Astrocyte of the cerebellum (primary cell): ENCODE measurements at regions of chr2 and their contacts with region 1.

Region 1: DNA sequence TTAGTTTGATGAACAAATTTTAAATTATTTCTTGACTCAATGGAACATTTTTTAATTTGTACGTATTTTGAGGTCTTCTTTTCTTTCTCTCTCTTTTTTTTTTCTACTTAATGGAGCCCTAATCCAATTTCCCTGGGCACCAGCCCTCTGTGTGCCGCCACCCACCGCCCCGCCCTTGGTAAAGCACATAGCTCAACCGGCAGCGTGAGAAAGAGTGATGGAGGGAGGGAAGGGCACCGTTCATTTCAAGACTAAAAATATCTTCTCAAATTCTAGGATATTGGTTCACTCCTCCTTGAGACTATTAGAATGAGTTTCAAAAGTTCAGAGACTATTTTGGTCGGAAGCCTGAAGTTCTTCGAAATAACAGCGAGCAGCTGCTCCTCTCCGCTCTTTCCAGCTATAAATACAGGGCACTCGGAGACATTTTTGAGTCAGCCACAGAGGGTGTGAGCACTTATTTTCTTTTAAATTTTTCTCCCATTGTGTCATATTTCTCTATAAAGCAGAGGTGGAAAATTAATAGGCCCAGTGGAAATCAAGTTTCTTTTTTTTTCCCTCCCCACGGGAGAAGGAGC is 731.7 kb upstream of the ID2 start:
- DNase-seq: no peak
- H3K4me3 ChIP-seq: no peak overlapping the region
- CTCF ChIP-seq: no peak

Region 2: DNA sequence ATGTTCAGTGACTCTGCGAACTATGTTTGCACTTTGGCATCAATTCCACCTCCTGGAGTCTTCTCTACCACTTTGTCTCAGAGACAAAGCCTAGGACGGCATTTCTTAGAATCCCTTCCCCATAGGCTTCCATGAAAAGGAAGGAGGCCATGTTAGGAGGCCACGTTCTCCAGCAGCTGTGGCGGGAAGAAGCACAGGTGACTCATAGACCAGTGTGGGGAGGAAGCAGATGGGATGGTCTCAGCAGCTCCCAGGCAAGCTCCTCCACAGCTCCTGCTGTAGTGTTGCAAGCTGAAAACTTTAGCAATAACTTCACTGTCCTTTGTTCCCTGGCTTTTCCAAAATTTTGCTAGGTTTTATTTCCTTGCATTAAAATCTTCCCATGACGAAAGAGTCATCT is 49.5 kb before region 1 on chr2:
- in situ Hi-C with region 1: loop called (anchors 5 kb)
- DNase-seq: no peak
- H3K4me3 ChIP-seq: no peak overlapping the region
- CTCF ChIP-seq: no peak

Region 3: GRCh38 chr2:8036366-8036765 is 86.2 kb after region 1 on chr2:
- in situ Hi-C with region 1: loop called (anchors 10 kb)
- DNase-seq: no peak
- H3K4me3 ChIP-seq: no peak overlapping the region
- CTCF ChIP-seq: no peak